ENCODE measurements at regions of chr20 and their contacts with region 1.

Region 1: GRCh38 chr20:38514947-38515346 is 42.3 kb downstream of the RALGAPB start:
- DNase-seq: no peak
- H3K4me3 Mint-ChIP-seq: no peak overlapping the region
- H3K27ac Mint-ChIP-seq: peak overlapping the region; percentile 43
- H3K4me1 Mint-ChIP-seq: peaks cover 10% of the 10 kb centered on the region
- H3K27me3 Mint-ChIP-seq: no peaks in the 10 kb centered on the region
- CTCF ChIP-seq: no peak

Region 2: DNA sequence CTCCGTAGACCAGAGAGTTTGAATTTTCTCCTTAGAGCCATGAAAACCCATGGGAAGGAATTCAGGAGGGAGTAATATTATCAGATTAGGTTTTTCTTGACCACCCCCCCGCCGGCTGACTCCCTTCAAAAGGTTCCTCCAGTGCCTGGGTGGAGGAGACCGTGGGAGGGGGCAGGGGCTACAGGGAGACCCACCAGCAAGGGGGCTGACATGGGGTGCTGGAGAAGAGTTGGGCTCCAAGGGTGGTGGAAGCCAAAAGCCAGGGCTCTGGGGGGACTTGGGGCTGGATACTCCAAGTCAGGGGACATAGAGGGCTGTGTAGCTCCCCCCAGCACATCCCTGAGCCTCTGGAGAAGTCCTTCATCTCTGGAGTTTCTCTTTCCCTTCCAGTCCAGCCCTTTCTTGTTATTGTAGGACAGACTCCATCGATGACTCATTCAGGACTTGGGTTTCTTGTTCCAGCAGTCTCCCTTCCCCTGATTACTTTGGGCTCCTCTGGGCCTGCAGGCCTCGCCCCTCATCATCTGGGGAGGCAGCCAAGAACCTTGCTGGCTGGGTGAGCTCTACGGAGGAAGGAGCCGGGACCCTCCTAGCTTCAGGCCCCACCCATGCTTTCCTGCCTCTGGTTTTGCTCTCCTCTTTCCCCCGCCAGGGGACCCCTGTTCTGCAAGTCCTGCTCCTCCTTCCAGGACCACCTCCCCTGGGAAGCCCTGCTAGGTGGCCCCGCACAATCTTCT is 243.9 kb before region 1 on chr20:
- CTCF ChIA-PET with region 1: no interaction called
- POLR2A ChIA-PET with region 1: no interaction called
- intact Hi-C with region 1: no loop called
- DNase-seq: peak; percentile 96
- H3K4me3 Mint-ChIP-seq: no peak overlapping the region
- H3K27ac Mint-ChIP-seq: peak overlapping the region; percentile 28
- H3K4me1 Mint-ChIP-seq: peaks cover 30% of the 10 kb centered on the region
- H3K27me3 Mint-ChIP-seq: no peaks in the 10 kb centered on the region
- CTCF ChIP-seq: no peak

Region 3: DNA sequence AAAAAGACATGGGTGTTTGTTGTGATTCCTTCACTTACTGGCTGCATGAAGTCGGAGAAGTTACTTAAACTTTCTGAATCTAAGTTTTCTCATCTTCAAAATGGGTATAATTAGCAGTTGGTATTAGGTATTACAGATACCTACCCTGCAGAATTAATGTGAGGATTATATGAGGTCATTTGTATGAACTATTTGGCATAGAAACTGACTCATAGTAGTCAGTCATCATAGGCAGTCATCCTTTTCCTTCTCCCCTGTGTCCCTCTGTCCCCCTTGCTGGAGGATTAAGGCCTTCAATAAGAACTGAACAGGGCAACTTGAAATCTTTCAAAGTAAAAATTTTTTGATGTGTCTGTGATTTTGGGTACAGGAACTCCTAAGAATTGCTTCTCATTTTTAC is 16.0 kb before region 1 on chr20:
- CTCF ChIA-PET with region 1: interaction called, 5 read pairs
- POLR2A ChIA-PET with region 1: interaction called, 15 read pairs
- intact Hi-C with region 1: no loop called
- DNase-seq: no peak
- H3K4me3 Mint-ChIP-seq: no peak overlapping the region
- H3K27ac Mint-ChIP-seq: no peak overlapping the region
- H3K4me1 Mint-ChIP-seq: peaks cover 6% of the 10 kb centered on the region
- H3K27me3 Mint-ChIP-seq: no peaks in the 10 kb centered on the region
- CTCF ChIP-seq: no peak

Measured in MCF 10A (cell line).